ENCODE measurements at regions of chr3 and their contacts with region 1.

Region 1: DNA sequence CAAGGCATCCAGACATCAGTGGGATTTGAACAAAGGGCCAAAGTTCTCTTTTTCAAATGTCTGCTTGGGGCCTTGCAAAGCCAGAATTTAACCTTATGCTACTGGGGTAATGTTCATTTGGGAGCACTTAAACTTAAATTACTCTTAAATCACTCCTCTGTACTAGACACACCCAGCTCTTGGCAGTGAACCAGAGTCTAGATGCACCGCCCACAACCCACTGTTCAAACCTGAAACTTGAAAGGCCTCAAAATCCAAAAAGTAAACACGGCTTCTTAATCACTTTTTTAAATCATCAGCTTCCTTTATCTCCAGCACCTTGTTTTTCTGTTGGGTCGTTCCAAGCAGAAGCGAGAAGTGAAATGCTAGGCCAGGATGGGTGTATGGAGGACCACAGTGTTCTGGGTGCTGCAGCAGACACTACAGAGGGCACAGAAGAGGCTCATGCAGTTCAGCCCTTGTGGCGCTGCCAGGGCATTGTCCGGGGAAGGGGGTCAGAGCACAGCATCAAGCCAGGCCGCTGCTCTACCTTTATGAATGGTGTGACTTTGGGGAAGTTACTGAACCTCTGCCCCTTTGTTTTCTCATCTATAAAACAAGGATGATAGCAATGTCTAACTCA is 28.8 kb downstream of the MECOM start:
- DNase-seq: no peak
- ATAC-seq: no peak
- H3K4me3 ChIP-seq: no peak overlapping the region
- H3K27ac ChIP-seq: no peak overlapping the region
- H3K4me1 ChIP-seq: no peaks in the 10 kb centered on the region
- H3K27me3 ChIP-seq: peaks cover 2% of the 10 kb centered on the region; the same call in 1 of the 2 replicates
- CTCF ChIP-seq: no peak

Region 2: GRCh38 chr3:169475978-169476698 is 158.6 kb before region 1 on chr3:
- CTCF ChIA-PET with region 1: interaction called, 12 read pairs
- POLR2A ChIA-PET with region 1: no interaction called
- in situ Hi-C with region 1: no loop called
- intact Hi-C with region 1: no loop called
- DNase-seq: no peak
- ATAC-seq: no peak
- H3K4me3 ChIP-seq: no peak overlapping the region
- H3K27ac ChIP-seq: no peak overlapping the region
- H3K4me1 ChIP-seq: no peaks in the 10 kb centered on the region
- H3K27me3 ChIP-seq: 0 out of 2 replicates have a peak, but pooled peaks cover 2% of the 10 kb centered on the region
- CTCF ChIP-seq: no peak

Measured in Panc1 (cell line).